ENCODE measurements at regions of chr1 and their contacts with region 1.

Region 1: GRCh38 chr1:28877132-28877781 is 37.1 kb upstream of the EPB41 start:
- DNase-seq: peak; percentile 81
- H3K4me3 Mint-ChIP-seq: no peak overlapping the region
- H3K27ac Mint-ChIP-seq: no peak overlapping the region
- H3K4me1 Mint-ChIP-seq: peaks cover 10% of the 10 kb centered on the region
- H3K27me3 Mint-ChIP-seq: peaks cover 12% of the 10 kb centered on the region
- CTCF ChIP-seq: peak; percentile 89

Region 2: DNA sequence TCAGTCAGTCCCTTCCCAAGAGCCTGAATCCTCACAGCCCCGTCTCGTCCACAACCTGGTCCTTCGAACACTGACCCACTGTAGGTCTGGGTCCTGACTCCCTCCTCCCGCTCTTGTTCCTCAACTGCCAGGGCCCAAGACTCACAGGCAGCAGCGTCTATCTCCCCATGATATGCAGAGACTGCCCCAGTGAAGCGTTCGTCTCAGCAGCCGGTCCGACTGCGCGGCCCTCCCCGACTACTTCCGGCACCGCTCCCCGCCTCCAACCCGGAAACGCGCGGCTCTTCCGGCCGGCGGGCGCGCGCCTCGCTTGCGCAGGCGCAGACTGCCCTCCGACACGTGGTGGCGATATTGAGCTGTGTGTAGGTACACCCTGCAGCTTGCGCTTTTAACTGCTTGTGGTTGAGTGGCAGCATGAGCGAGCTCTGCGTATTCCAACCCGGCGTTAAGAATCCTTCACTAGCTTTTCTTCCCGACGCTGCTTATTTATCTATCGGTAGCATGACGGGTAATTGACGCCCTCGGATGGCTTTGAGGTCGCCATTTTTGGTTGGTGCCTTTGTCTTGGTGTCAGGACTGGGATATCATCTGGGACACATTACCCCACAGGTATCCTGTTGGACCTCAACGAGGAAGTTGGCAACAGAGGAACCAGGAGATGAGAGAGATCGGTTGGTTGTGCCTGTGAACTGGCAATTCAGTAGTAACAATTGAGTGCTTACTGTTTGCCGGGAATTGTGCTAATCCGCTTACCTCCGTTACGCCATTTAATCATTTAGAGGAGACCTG is 234.2 kb before region 1 on chr1 and contains the start of gene TAF12:
- CTCF ChIA-PET with region 1: interaction called, 12 read pairs
- intact Hi-C with region 1: loop called (anchors 2 kb)
- DNase-seq: peak; percentile 90
- H3K4me3 Mint-ChIP-seq: peak within 1 kb of the TSS; percentile 96
- H3K27ac Mint-ChIP-seq: peak within 1 kb of the TSS; percentile 87
- H3K4me1 Mint-ChIP-seq: peaks cover 29% of the 10 kb centered on the region
- H3K27me3 Mint-ChIP-seq: no peaks in the 10 kb centered on the region
- CTCF ChIP-seq: peak; percentile 31
- total RNA-seq, gene TAF12: 21.6 and 22.4 TPM in 2 replicates

Region 3: DNA sequence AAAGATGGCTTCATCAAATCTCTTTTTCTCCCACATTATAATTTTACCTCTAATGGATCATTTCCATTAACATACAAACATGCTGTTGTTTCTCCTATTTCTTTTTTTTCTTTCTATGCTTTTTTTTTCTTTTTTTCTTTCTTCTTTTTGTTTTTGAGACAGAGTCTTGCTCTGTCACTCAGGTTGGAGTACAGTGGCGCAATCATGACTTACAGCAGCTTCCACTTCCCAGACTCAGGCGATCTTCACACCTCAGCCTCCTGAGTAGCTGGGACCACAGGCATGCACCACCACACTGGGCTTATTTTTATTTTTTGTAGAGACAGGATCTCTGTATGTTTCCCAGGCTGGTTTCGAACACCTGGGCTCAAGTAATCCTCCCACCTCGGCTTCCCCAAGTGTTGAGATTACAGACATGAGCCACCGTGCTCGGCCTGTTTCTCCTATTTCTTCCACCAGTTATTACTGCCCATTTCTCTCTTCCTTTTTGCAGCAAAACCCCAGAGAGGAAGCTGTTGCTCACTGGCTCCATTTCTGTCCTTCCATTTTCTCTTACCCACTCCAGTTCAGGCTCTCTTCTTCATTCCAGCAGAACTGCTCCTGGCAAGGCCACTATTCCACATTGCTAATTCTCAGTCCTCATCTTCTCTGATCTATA is 97.4 kb before region 1 on chr1:
- CTCF ChIA-PET with region 1: interaction called, 52 read pairs
- intact Hi-C with region 1: loop called (anchors 1 kb)
- DNase-seq: no peak
- H3K4me3 Mint-ChIP-seq: no peak overlapping the region
- H3K27ac Mint-ChIP-seq: no peak overlapping the region
- H3K4me1 Mint-ChIP-seq: peaks cover 1% of the 10 kb centered on the region
- H3K27me3 Mint-ChIP-seq: no peaks in the 10 kb centered on the region
- CTCF ChIP-seq: no peak

Region 4: GRCh38 chr1:28845786-28846543 is 31.3 kb before region 1 on chr1:
- CTCF ChIA-PET with region 1: interaction called, 14 read pairs
- intact Hi-C with region 1: no loop called
- DNase-seq: peak; percentile 35
- H3K4me3 Mint-ChIP-seq: no peak overlapping the region
- H3K27ac Mint-ChIP-seq: no peak overlapping the region
- H3K4me1 Mint-ChIP-seq: peaks cover 8% of the 10 kb centered on the region
- H3K27me3 Mint-ChIP-seq: no peaks in the 10 kb centered on the region
- CTCF ChIP-seq: peak; percentile 20

Region 5: DNA sequence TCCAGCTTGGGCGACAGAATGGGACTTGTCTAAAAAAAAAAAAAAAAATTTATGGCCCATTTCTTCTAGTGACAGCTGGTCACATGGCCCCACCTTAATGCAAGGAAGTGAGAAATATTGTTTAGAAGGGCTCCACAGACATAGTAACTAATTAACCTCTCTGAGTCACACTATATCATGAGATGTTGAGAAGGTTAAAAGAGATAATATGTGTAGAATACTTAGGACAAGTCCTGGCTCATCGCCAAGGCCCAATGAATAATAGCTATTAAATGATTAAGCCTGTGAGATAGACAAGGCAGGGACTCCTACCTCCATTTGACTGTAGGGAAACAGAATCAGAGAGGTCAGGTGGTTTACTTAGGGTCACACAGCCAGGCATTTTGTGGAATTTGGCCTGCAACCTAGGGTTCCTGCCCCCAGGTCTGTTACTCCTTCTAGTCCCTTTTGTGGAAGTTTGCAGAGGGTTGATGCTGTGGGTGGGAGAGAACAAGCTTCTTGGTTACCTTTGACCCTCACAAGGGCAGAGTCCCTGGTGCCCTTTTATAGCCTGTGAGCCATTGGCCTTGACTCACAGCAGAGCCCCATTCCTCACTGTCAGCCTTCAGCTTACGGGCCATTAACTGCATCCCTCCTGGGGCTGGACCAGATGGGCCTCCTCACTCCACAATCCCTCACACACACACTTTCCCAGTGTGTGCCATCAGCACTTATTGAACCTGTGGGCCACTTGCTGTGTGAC is 16.8 kb before region 1 on chr1:
- CTCF ChIA-PET with region 1: interaction called, 11 read pairs
- intact Hi-C with region 1: no loop called
- DNase-seq: peak; percentile 76
- H3K4me3 Mint-ChIP-seq: no peak overlapping the region
- H3K27ac Mint-ChIP-seq: peak overlapping the region; percentile 36
- H3K4me1 Mint-ChIP-seq: peaks cover 26% of the 10 kb centered on the region
- H3K27me3 Mint-ChIP-seq: peaks cover 36% of the 10 kb centered on the region
- CTCF ChIP-seq: no peak

Region 6: GRCh38 chr1:29033829-29034466 is 156.7 kb after region 1 on chr1:
- CTCF ChIA-PET with region 1: interaction called, 65 read pairs
- intact Hi-C with region 1: loop called (anchors 1 kb)
- DNase-seq: no peak
- H3K4me3 Mint-ChIP-seq: no peak overlapping the region
- H3K27ac Mint-ChIP-seq: no peak overlapping the region
- H3K4me1 Mint-ChIP-seq: no peaks in the 10 kb centered on the region
- H3K27me3 Mint-ChIP-seq: no peaks in the 10 kb centered on the region
- CTCF ChIP-seq: peak; percentile 39

Region 7: GRCh38 chr1:29202584-29203340 is 325.5 kb after region 1 on chr1:
- CTCF ChIA-PET with region 1: interaction called, 22 read pairs
- intact Hi-C with region 1: loop called (anchors 2 kb)
- DNase-seq: peak; percentile 96
- H3K4me3 Mint-ChIP-seq: peak overlapping the region; percentile 19
- H3K27ac Mint-ChIP-seq: no peak overlapping the region
- H3K4me1 Mint-ChIP-seq: peaks cover 19% of the 10 kb centered on the region
- H3K27me3 Mint-ChIP-seq: no peaks in the 10 kb centered on the region
- CTCF ChIP-seq: peak; percentile 90